GM12878 (cell line): ENCODE measurements at regions of chr16 and their contacts with region 1.

Region 1: GRCh38 chr16:71537643-71538042 is 11.4 kb downstream of the CHST4 start:
- DNase-seq: peak; percentile 21
- ATAC-seq: peak; percentile 96
- H3K4me3 ChIP-seq: no peak overlapping the region
- H3K27ac ChIP-seq: no peak overlapping the region
- H3K4me1 ChIP-seq: 0 out of 2 replicates have a peak, but pooled peaks cover 4% of the 10 kb centered on the region
- H3K27me3 ChIP-seq: no peaks in the 10 kb centered on the region
- CTCF ChIP-seq: peak; percentile 84 to 87 (median 86)
- EP300 ChIP-seq: no peak
- POLR2A ChIP-seq: no peak
- RAD21 ChIP-seq: peak; percentile 71

Region 2: GRCh38 chr16:71185347-71185746 is 352.3 kb before region 1 on chr16:
- CTCF ChIA-PET with region 1: no interaction called
- POLR2A ChIA-PET with region 1: no interaction called
- RAD21 ChIA-PET with region 1: no interaction called
- SMC1A ChIA-PET with region 1: no interaction called
- in situ Hi-C with region 1: no loop called
- intact Hi-C with region 1: no loop called
- DNase-seq: no peak
- ATAC-seq: no peak
- H3K4me3 ChIP-seq: no peak overlapping the region
- H3K27ac ChIP-seq: no peak overlapping the region
- H3K4me1 ChIP-seq: no peaks in the 10 kb centered on the region
- H3K27me3 ChIP-seq: no peaks in the 10 kb centered on the region
- CTCF ChIP-seq: no peak
- EP300 ChIP-seq: no peak
- POLR2A ChIP-seq: no peak
- RAD21 ChIP-seq: no peak

Region 3: GRCh38 chr16:71367241-71367976 is 170.2 kb before region 1 on chr16:
- CTCF ChIA-PET with region 1: no interaction called
- POLR2A ChIA-PET with region 1: interaction called, 10 read pairs
- RAD21 ChIA-PET with region 1: no interaction called
- SMC1A ChIA-PET with region 1: no interaction called
- in situ Hi-C with region 1: no loop called
- intact Hi-C with region 1: no loop called
- DNase-seq: peak; percentile 2
- ATAC-seq: peak; percentile 93
- H3K4me3 ChIP-seq: no peak overlapping the region
- H3K27ac ChIP-seq: no peak overlapping the region
- H3K4me1 ChIP-seq: no peaks in the 10 kb centered on the region
- H3K27me3 ChIP-seq: no peaks in the 10 kb centered on the region; a peak in 3 of 4 replicates
- CTCF ChIP-seq: peak; percentile 67 to 78 (median 74)
- EP300 ChIP-seq: no peak
- POLR2A ChIP-seq: no peak
- RAD21 ChIP-seq: peak; percentile 11; the same call in 1 of the 2 replicates

Region 4: GRCh38 chr16:71412270-71413160 is 125.1 kb before region 1 on chr16:
- CTCF ChIA-PET with region 1: interaction called, 24 read pairs
- POLR2A ChIA-PET with region 1: interaction called, 6 read pairs
- RAD21 ChIA-PET with region 1: interaction called, 5 read pairs
- SMC1A ChIA-PET with region 1: interaction called, 18 read pairs
- in situ Hi-C with region 1: no loop called
- intact Hi-C with region 1: loop called (anchors 1 kb)
- DNase-seq: no peak
- ATAC-seq: peak; percentile 92
- H3K4me3 ChIP-seq: no peak overlapping the region
- H3K27ac ChIP-seq: no peak overlapping the region
- H3K4me1 ChIP-seq: no peaks in the 10 kb centered on the region
- H3K27me3 ChIP-seq: peaks cover 0 to 7% of the 10 kb centered on the region in 2 experiments; a peak in 1 of 4 replicates
- CTCF ChIP-seq: peak; percentile 66 to 83 (median 82)
- EP300 ChIP-seq: no peak
- POLR2A ChIP-seq: no peak
- RAD21 ChIP-seq: peak; percentile 76

Region 5: DNA sequence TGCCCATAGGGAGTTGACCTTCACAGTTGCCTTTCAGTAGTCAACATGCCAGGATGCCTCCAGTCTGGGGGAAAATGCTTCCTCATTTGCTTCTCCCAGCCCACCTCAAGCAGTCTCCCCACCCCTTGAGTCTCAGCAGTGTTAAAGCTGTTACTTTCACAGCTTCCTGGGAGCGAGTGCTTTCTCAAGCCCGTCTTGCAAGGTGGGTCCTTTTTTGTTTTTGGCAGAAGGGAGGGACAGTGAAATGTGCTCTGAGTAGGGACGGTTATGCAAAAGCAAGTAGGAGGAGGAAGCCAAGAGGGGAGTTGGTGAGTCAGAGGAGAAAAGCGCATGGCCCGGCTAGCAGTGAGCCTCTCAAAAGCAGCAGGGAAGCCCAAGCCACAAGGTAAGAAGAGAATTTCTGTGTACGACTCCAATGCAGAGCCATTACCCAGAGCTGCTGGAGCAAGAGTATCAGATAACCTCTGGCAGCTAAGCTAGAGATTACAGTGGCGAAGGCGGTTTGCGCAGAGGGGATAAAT is 11.5 kb before region 1 on chr16 and contains the start of gene CHST4:
- CTCF ChIA-PET with region 1: interaction called, 20 read pairs
- POLR2A ChIA-PET with region 1: no interaction called
- RAD21 ChIA-PET with region 1: interaction called, 4 read pairs
- SMC1A ChIA-PET with region 1: interaction called, 10 read pairs
- in situ Hi-C with region 1: no loop called
- intact Hi-C with region 1: no loop called
- DNase-seq: no peak
- ATAC-seq: peak; percentile 74
- H3K4me3 ChIP-seq: no peak within 1 kb of the TSS
- H3K27ac ChIP-seq: no peak within 1 kb of the TSS
- H3K4me1 ChIP-seq: no peaks in the 10 kb centered on the region; the same call in 1 of the 2 replicates
- H3K27me3 ChIP-seq: no peaks in the 10 kb centered on the region; a peak in 1 of 4 replicates
- CTCF ChIP-seq: no peak
- EP300 ChIP-seq: no peak
- POLR2A ChIP-seq: no peak
- RAD21 ChIP-seq: no peak
- polyA plus RNA-seq, gene CHST4: 0.60 to 1.4 TPM

Region 6: DNA sequence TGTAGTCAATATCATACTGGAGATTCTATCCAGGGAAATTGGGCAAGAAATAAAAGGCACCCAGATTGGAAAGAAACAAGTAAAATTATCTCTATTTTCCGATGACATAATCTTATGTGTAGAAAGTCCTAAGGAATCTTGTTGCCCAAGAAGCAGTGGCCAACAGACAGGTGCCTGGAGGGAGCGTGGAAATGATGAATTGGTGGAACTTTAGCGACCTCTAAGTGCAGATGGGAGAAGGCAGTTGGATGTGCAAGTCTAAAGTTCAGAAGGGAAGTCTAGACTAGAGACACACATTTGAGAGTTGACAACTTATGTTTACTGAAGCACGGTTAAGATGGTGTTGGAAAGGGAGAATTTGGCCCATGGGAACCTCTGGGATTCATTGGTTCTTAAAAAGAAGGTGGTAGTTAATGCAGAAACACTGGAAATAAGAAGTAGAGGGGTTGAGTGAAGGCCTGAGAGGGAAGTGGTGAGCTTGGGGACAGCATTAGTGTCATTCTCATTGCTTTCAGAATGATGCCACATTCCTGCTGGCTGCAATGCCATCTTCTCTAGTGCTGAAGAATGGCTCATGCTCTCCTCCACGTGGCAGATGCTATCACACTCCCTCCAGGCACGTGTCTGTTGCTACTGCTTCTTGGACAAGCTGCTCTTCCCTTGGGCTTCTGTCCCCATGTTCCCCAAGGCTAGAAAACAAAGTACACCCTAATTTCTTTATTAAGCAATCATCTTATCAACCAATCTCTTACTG is 15.2 kb after region 1 on chr16:
- CTCF ChIA-PET with region 1: interaction called, 14 read pairs
- POLR2A ChIA-PET with region 1: no interaction called
- RAD21 ChIA-PET with region 1: no interaction called
- SMC1A ChIA-PET with region 1: interaction called, 15 read pairs
- in situ Hi-C with region 1: no loop called
- intact Hi-C with region 1: no loop called
- DNase-seq: no peak
- ATAC-seq: peak; percentile 50
- H3K4me3 ChIP-seq: no peak overlapping the region
- H3K27ac ChIP-seq: no peak overlapping the region
- H3K4me1 ChIP-seq: no peaks in the 10 kb centered on the region
- H3K27me3 ChIP-seq: no peaks in the 10 kb centered on the region
- CTCF ChIP-seq: peak in 2 of 3 experiments; percentile 11 to 19; a peak in 2 of 6 replicates
- EP300 ChIP-seq: no peak
- POLR2A ChIP-seq: no peak
- RAD21 ChIP-seq: no peak

Region 7: GRCh38 chr16:71564155-71564967 is 26.7 kb after region 1 on chr16:
- CTCF ChIA-PET with region 1: interaction called, 23 read pairs
- POLR2A ChIA-PET with region 1: no interaction called
- RAD21 ChIA-PET with region 1: interaction called, 15 read pairs
- SMC1A ChIA-PET with region 1: interaction called, 10 read pairs
- in situ Hi-C with region 1: no loop called
- intact Hi-C with region 1: no loop called
- DNase-seq: no peak
- ATAC-seq: peak; percentile 1; the same call in 2 of the 3 replicates
- H3K4me3 ChIP-seq: peak overlapping the region; percentile 76
- H3K27ac ChIP-seq: peak overlapping the region; percentile 91
- H3K4me1 ChIP-seq: peaks cover 3% of the 10 kb centered on the region; the same call in 1 of the 2 replicates
- H3K27me3 ChIP-seq: no peaks in the 10 kb centered on the region
- CTCF ChIP-seq: no peak
- EP300 ChIP-seq: no peak
- POLR2A ChIP-seq: no peak
- RAD21 ChIP-seq: no peak